ENCODE measurements at regions of chr16 and their contacts with region 1.

Region 1: GRCh38 chr16:78988361-78988969 is 612.1 kb downstream of the MAF start:
- DNase-seq: no peak
- H3K4me3 ChIP-seq: no peak overlapping the region
- H3K4me3 Mint-ChIP-seq: no peak overlapping the region
- H3K27ac ChIP-seq: no peak overlapping the region
- H3K27ac Mint-ChIP-seq: peak overlapping the region in 1 of 8 donors; percentile 43
- H3K4me1 ChIP-seq: no peaks in the 10 kb centered on the region
- H3K4me1 Mint-ChIP-seq: peaks cover 0 to 12% (median 2%) of the 10 kb centered on the region in 3 donors
- H3K27me3 ChIP-seq: no peaks in the 10 kb centered on the region
- H3K27me3 Mint-ChIP-seq: no peaks in the 10 kb centered on the region

Region 2: GRCh38 chr16:78816499-78817195 is 171.8 kb before region 1 on chr16:
- CTCF ChIA-PET with region 1: no interaction called
- POLR2A ChIA-PET with region 1: interaction called, 11 read pairs
- DNase-seq: no peak
- H3K4me3 ChIP-seq: no peak overlapping the region
- H3K4me3 Mint-ChIP-seq: no peak overlapping the region
- H3K27ac ChIP-seq: no peak overlapping the region
- H3K27ac Mint-ChIP-seq: no peak overlapping the region
- H3K4me1 ChIP-seq: no peaks in the 10 kb centered on the region
- H3K4me1 Mint-ChIP-seq: no peaks in the 10 kb centered on the region
- H3K27me3 ChIP-seq: no peaks in the 10 kb centered on the region
- H3K27me3 Mint-ChIP-seq: no peaks in the 10 kb centered on the region

Region 3: DNA sequence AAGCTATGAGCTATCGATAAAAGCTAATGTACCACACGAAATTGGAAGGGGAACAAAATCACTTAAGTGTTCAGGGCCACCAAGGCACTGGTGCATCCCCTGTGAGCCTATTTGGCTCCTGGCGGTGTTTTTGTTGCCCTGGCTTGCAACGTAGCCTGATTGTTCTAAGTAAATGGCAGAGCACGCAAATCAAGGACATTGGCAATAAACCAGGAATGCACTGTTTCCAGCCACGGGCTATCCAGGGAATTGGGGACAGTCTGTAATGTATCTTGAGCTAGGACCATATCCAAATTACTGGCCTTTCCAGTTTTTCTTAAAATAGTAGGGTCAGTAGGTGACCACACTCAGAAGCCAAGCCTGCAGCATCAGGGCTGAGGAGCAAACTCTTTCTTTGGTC is 121.9 kb before region 1 on chr16:
- CTCF ChIA-PET with region 1: no interaction called
- POLR2A ChIA-PET with region 1: no interaction called
- DNase-seq: no peak
- H3K4me3 ChIP-seq: no peak overlapping the region
- H3K4me3 Mint-ChIP-seq: peak overlapping the region in 1 of 7 donors; percentile 6
- H3K27ac ChIP-seq: no peak overlapping the region
- H3K27ac Mint-ChIP-seq: no peak overlapping the region
- H3K4me1 ChIP-seq: no peaks in the 10 kb centered on the region
- H3K4me1 Mint-ChIP-seq: peaks cover 0 to 4% (median 0%) of the 10 kb centered on the region in 3 donors
- H3K27me3 ChIP-seq: no peaks in the 10 kb centered on the region
- H3K27me3 Mint-ChIP-seq: no peaks in the 10 kb centered on the region

Measured in CD8-positive, alpha-beta memory T cell (primary cell).